ENCODE measurements at regions of chr17 and their contacts with region 1.

Region 1: GRCh38 chr17:65100316-65101140 is 36.6 kb upstream of the RGS9 start:
- DNase-seq: peak; percentile 77 to 83 (median 81)
- H3K4me3 ChIP-seq: peak overlapping the region; percentile 65 to 77
- H3K4me3 Mint-ChIP-seq: peak overlapping the region; percentile 87 to 96 (median 90)
- H3K27ac ChIP-seq: peak overlapping the region; percentile 61
- H3K27ac Mint-ChIP-seq: peak overlapping the region; percentile 85 to 97 (median 93)
- H3K4me1 ChIP-seq: peaks cover 26% of the 10 kb centered on the region
- H3K4me1 Mint-ChIP-seq: peaks cover 18 to 33% (median 26%) of the 10 kb centered on the region in 4 donors
- H3K27me3 ChIP-seq: no peaks in the 10 kb centered on the region
- H3K27me3 Mint-ChIP-seq: peaks cover 0 to 1% of the 10 kb centered on the region in 2 donors

Region 2: GRCh38 chr17:64920026-64920418 is 180.5 kb before region 1 on chr17:
- CTCF ChIA-PET with region 1: interaction called, 4 read pairs
- POLR2A ChIA-PET with region 1: interaction called, 5 read pairs
- intact Hi-C with region 1: loop called (anchors 2 kb)
- DNase-seq: peak in 1 of 5 donors; percentile 45
- H3K4me3 ChIP-seq: peak overlapping the region; percentile 47 to 61
- H3K4me3 Mint-ChIP-seq: peak overlapping the region; percentile 86 to 97 (median 88)
- H3K27ac ChIP-seq: peak overlapping the region; percentile 71
- H3K27ac Mint-ChIP-seq: peak overlapping the region; percentile 91 to 97 (median 95)
- H3K4me1 ChIP-seq: peaks cover 6% of the 10 kb centered on the region
- H3K4me1 Mint-ChIP-seq: peaks cover 2 to 18% (median 11%) of the 10 kb centered on the region in 4 donors
- H3K27me3 ChIP-seq: no peaks in the 10 kb centered on the region
- H3K27me3 Mint-ChIP-seq: no peaks in the 10 kb centered on the region

Region 3: DNA sequence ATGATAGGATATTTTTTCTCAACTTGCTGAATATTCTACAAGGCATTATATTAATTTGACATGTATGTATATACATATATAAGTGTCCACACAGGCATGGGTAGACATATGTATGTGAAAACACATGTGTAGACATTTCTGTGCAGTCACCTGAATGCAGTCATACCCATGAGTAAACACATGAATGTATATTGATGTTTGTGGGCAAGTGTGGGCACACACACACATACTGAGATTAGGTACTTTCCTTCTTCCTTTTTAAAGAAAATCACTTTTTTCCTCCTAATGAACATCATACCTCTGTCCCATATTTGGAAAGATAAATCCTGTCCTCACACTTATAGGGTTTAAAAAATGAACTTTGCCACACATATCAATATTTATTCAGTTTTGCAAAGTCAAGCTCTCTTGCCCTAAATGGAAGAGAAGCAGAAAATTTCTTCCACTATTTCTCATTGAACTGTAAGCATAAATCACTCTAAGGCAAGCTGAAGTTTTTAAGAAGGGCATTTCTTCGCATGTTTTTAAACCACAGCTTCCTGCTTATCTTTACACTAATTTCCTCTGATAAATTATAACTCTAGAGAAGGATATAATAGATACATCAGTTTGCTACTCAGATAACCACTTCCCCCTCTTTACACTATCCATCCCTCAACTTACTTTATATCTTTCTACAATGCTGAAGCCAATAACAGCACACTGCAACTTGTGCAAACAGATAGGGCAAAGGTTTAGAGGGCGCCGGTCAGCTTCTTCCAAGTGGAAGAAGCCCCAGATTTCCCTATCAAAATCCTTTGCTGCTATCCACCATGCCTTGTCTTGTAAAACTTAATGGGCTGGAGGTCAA is 131.7 kb before region 1 on chr17:
- CTCF ChIA-PET with region 1: interaction called, 35 read pairs
- POLR2A ChIA-PET with region 1: interaction called, 23 read pairs
- intact Hi-C with region 1: no loop called
- DNase-seq: peak; percentile 45 to 71 (median 47)
- H3K4me3 ChIP-seq: no peak overlapping the region
- H3K4me3 Mint-ChIP-seq: peak overlapping the region; percentile 69 to 92 (median 80)
- H3K27ac ChIP-seq: peak overlapping the region; percentile 62
- H3K27ac Mint-ChIP-seq: peak overlapping the region; percentile 92 to 99 (median 97)
- H3K4me1 ChIP-seq: peaks cover 77% of the 10 kb centered on the region
- H3K4me1 Mint-ChIP-seq: peaks cover 35 to 79% (median 59%) of the 10 kb centered on the region in 4 donors
- H3K27me3 ChIP-seq: no peaks in the 10 kb centered on the region
- H3K27me3 Mint-ChIP-seq: no peaks in the 10 kb centered on the region

Region 4: GRCh38 chr17:64984851-64985521 is 115.5 kb before region 1 on chr17:
- CTCF ChIA-PET with region 1: interaction called, 7 read pairs
- POLR2A ChIA-PET with region 1: interaction called, 17 read pairs
- intact Hi-C with region 1: no loop called
- DNase-seq: peak; percentile 74 to 94 (median 84)
- H3K4me3 ChIP-seq: peak overlapping the region; percentile 19 to 30
- H3K4me3 Mint-ChIP-seq: peak overlapping the region; percentile 71 to 87 (median 82)
- H3K27ac ChIP-seq: peak overlapping the region; percentile 92
- H3K27ac Mint-ChIP-seq: peak overlapping the region; percentile 98 to 100 (median 99)
- H3K4me1 ChIP-seq: peaks cover 54% of the 10 kb centered on the region
- H3K4me1 Mint-ChIP-seq: peaks cover 32 to 54% (median 45%) of the 10 kb centered on the region in 4 donors
- H3K27me3 ChIP-seq: no peaks in the 10 kb centered on the region
- H3K27me3 Mint-ChIP-seq: no peaks in the 10 kb centered on the region

Region 5: DNA sequence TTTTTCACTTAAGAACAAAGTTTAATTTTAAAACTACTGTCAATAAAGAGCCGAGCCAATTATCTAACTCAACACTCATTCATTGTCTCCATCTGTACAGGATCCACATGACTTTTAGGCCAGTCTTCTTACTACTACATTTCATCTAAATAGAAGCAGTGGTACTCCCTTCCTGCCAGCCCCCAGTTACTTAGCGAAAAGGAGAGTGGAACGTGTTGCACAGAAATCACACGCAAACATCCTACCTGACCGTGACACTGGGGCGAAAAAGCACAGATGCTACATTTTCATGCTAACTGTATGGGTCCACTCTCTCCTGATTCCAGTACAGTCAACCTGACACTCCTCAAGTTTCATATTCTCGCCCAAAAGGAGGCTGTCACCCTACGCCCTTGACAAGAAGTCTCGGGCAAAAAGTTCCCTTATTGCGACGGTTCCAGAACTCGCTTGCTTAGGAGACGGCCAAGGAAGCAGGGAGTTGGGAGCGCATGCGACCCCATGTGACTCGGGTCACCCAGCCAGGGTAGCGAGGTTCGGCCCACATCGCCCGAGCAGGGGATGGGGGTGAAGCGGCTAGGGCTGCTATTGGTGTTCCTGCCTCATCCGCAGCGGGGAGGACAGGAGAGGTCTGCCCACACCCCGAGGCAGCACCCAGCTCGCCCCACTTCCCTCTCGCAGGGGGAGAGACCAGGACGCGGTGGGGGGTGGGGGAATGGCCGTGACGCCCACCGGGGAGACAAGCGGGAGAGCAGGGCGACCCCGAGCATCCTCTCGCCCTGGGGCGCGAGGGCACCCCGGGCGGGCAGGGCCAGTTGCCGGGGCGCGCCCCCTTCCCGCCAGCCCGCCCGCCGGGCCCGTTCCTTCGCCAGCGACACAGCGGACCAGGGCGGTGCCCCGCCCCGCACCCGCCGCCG is 44.9 kb before region 1 on chr17:
- CTCF ChIA-PET with region 1: interaction called, 8 read pairs
- POLR2A ChIA-PET with region 1: interaction called, 9 read pairs
- intact Hi-C with region 1: loop called (anchors 1 kb)
- DNase-seq: peak; percentile 37 to 63 (median 43)
- H3K4me3 ChIP-seq: peak overlapping the region; percentile 91 to 94
- H3K4me3 Mint-ChIP-seq: peak overlapping the region; percentile 91 to 100 (median 98)
- H3K27ac ChIP-seq: peak overlapping the region; percentile 96
- H3K27ac Mint-ChIP-seq: peak overlapping the region; percentile 96 to 99 (median 98)
- H3K4me1 ChIP-seq: peaks cover 48% of the 10 kb centered on the region
- H3K4me1 Mint-ChIP-seq: peaks cover 32 to 65% (median 47%) of the 10 kb centered on the region in 4 donors
- H3K27me3 ChIP-seq: no peaks in the 10 kb centered on the region
- H3K27me3 Mint-ChIP-seq: no peaks in the 10 kb centered on the region

Region 6: GRCh38 chr17:65122836-65123756 is 22.6 kb after region 1 on chr17:
- CTCF ChIA-PET with region 1: interaction called, 9 read pairs
- POLR2A ChIA-PET with region 1: interaction called, 16 read pairs
- intact Hi-C with region 1: no loop called
- DNase-seq: peak; percentile 86 to 90 (median 88)
- H3K4me3 ChIP-seq: peak overlapping the region; percentile 4 to 57
- H3K4me3 Mint-ChIP-seq: peak overlapping the region; percentile 87 to 96 (median 92)
- H3K27ac ChIP-seq: peak overlapping the region; percentile 53
- H3K27ac Mint-ChIP-seq: peak overlapping the region; percentile 80 to 99 (median 99)
- H3K4me1 ChIP-seq: peaks cover 20% of the 10 kb centered on the region
- H3K4me1 Mint-ChIP-seq: peaks cover 11 to 27% (median 20%) of the 10 kb centered on the region in 4 donors
- H3K27me3 ChIP-seq: no peaks in the 10 kb centered on the region
- H3K27me3 Mint-ChIP-seq: peaks cover 0 to 5% of the 10 kb centered on the region in 2 donors

Region 7: GRCh38 chr17:65198653-65199382 is 98.3 kb after region 1 on chr17:
- CTCF ChIA-PET with region 1: interaction called, 4 read pairs
- POLR2A ChIA-PET with region 1: no interaction called
- intact Hi-C with region 1: loop called (anchors 1 kb)
- DNase-seq: peak in 4 of 5 donors; percentile 65 to 68 (median 68)
- H3K4me3 ChIP-seq: no peak overlapping the region
- H3K4me3 Mint-ChIP-seq: no peak overlapping the region
- H3K27ac ChIP-seq: no peak overlapping the region
- H3K27ac Mint-ChIP-seq: peak overlapping the region in 2 of 7 donors; percentile 3 to 15
- H3K4me1 ChIP-seq: peaks cover 6% of the 10 kb centered on the region
- H3K4me1 Mint-ChIP-seq: peaks cover 0 to 6% (median 4%) of the 10 kb centered on the region in 4 donors
- H3K27me3 ChIP-seq: no peaks in the 10 kb centered on the region
- H3K27me3 Mint-ChIP-seq: no peaks in the 10 kb centered on the region

Region 8: GRCh38 chr17:65297378-65297777 is 196.8 kb after region 1 on chr17:
- CTCF ChIA-PET with region 1: no interaction called
- POLR2A ChIA-PET with region 1: no interaction called
- intact Hi-C with region 1: no loop called
- DNase-seq: no peak
- H3K4me3 ChIP-seq: no peak overlapping the region
- H3K4me3 Mint-ChIP-seq: no peak overlapping the region
- H3K27ac ChIP-seq: no peak overlapping the region
- H3K27ac Mint-ChIP-seq: no peak overlapping the region
- H3K4me1 ChIP-seq: no peaks in the 10 kb centered on the region
- H3K4me1 Mint-ChIP-seq: peaks cover 0 to 6% (median 4%) of the 10 kb centered on the region in 4 donors
- H3K27me3 ChIP-seq: no peaks in the 10 kb centered on the region
- H3K27me3 Mint-ChIP-seq: peaks cover 3 to 6% of the 10 kb centered on the region in 2 donors

Measured in CD4-positive, alpha-beta memory T cell (primary cell).